Activated CD4-positive, alpha-beta memory T cell treated with anti-CD3 and anti-CD28 coated beads for 36 hours (primary cell): ENCODE measurements at regions of chrX and their contacts with region 1.

Region 1: DNA sequence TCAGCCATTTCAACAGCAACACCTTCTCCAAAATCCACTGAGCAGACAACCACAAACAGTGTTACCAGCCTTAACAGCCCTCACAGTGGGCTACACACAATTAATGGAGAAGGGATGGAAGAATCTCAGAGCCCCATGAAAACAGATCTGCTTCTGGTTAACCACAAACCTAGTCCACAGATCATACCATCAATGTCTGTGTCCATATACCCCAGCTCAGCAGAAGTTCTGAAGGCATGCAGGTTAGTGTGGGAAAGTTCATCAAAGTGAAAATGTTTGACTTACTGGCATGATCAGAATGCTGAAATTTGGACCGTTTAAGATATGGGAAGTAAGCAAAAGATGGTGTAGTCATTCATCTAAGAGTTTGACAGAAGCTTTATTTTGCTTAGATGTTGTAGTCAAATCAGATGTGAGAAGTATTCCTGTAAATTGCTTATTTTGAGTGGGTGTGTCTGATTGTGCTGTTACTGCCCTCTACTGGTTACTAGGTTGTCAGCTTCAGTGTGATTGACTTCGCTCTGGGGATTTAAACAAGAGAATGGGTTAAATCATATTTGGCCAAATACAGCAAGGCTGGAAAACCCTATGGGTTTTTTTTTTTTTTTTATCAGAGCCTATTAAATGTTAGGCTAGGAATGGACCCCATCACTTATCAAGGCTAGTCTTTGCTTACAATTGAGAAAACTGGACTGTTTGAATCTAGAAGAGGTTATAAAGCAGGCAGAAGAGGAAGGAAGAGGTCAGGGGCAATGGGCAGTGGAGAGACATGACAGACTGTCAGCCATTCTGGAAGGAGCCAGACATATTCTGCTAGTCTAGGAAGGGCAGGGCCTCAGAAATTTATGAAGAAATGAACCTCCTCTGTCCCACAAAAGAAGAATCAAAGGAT is 130.3 kb downstream of the DIPK2B start:
- DNase-seq: no peak
- H3K4me3 Mint-ChIP-seq: peak overlapping the region; percentile 12
- H3K27ac Mint-ChIP-seq: peak overlapping the region; percentile 82
- H3K4me1 Mint-ChIP-seq: peaks cover 57% of the 10 kb centered on the region
- H3K27me3 Mint-ChIP-seq: no peaks in the 10 kb centered on the region

Region 2: GRCh38 chrX:44872817-44873414 is 197.4 kb before region 1 on chrX and contains the start of gene KDM6A:
- CTCF ChIA-PET with region 1: interaction called, 3 read pairs
- POLR2A ChIA-PET with region 1: interaction called, 3 read pairs
- intact Hi-C with region 1: loop called (anchors 5 kb)
- DNase-seq: peak; percentile 96
- H3K4me3 Mint-ChIP-seq: peak within 1 kb of the TSS; percentile 95
- H3K27ac Mint-ChIP-seq: peak within 1 kb of the TSS; percentile 98
- H3K4me1 Mint-ChIP-seq: peaks cover 12% of the 10 kb centered on the region
- H3K27me3 Mint-ChIP-seq: no peaks in the 10 kb centered on the region
- total RNA-seq, gene KDM6A: 20.9 to 21.5 TPM

Region 3: DNA sequence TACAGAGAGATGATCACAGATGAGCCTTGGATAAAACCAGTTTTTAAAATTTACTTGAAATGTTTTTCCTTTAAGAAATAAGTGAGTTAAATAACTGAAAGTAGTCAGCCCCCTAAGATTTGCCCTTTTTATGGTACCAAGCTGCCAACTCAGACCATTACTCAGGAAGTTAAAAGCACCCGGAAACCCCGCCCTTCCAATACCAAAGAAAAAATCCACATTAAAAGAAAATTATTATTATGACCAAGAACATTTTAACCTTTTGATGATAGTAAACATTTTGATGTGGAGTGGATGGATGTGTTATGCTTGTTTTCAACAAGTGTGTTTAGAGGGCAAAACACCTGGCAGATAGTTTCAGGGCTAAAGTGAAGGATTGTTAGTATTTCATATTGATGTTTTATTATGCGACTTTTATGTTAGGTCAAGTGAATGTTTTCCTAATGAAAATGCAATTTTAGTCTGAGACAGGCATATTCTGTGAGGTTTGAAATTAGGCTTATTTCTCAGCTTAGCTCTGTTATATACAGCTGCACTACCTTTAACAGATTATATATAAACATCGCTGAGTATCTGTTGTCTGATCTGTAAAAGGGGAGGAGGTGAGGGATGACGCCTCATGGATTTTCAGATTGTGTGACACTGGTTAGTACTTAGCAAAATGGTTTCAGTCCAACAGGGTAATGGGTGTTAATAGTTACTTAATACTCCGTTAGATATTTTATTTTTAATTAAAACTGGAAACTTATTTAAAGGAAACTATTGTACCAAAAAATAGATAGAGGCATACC is 108.3 kb before region 1 on chrX:
- CTCF ChIA-PET with region 1: no interaction called
- POLR2A ChIA-PET with region 1: no interaction called
- intact Hi-C with region 1: loop called (anchors 5 kb)
- DNase-seq: no peak
- H3K4me3 Mint-ChIP-seq: no peak overlapping the region
- H3K27ac Mint-ChIP-seq: no peak overlapping the region
- H3K4me1 Mint-ChIP-seq: peaks cover 47% of the 10 kb centered on the region
- H3K27me3 Mint-ChIP-seq: no peaks in the 10 kb centered on the region

Region 4: GRCh38 chrX:44997888-44998287 is 72.5 kb before region 1 on chrX:
- CTCF ChIA-PET with region 1: interaction called, 3 read pairs
- POLR2A ChIA-PET with region 1: no interaction called
- intact Hi-C with region 1: loop called (anchors 5 kb)
- DNase-seq: no peak
- H3K4me3 Mint-ChIP-seq: peak overlapping the region; percentile 35
- H3K27ac Mint-ChIP-seq: peak overlapping the region; percentile 90
- H3K4me1 Mint-ChIP-seq: peaks cover 67% of the 10 kb centered on the region
- H3K27me3 Mint-ChIP-seq: no peaks in the 10 kb centered on the region

Region 5: DNA sequence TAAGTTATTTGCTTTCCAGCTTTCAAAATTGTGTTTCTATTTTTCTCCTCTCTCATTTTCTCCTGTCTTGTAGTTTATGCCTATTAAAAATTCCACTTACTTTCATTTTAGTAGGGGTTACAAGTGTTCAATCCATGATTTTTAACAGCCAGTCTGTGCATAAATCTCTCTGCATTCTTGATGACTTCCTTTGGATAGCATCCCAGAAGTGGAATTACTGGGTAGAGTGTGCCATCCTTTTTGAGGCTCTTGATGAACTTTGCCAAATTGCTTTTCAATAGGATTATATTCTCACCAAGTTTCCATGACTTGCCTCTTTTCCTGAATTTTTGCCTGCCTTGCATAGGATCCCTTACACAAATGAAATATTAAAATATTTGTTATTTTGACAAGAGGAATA is 71.8 kb after region 1 on chrX:
- CTCF ChIA-PET with region 1: no interaction called
- POLR2A ChIA-PET with region 1: no interaction called
- intact Hi-C with region 1: no loop called
- DNase-seq: no peak
- H3K4me3 Mint-ChIP-seq: no peak overlapping the region
- H3K27ac Mint-ChIP-seq: no peak overlapping the region
- H3K4me1 Mint-ChIP-seq: no peaks in the 10 kb centered on the region
- H3K27me3 Mint-ChIP-seq: no peaks in the 10 kb centered on the region